ENCODE measurements at regions of chr1 and their contacts with region 1.

Region 1: DNA sequence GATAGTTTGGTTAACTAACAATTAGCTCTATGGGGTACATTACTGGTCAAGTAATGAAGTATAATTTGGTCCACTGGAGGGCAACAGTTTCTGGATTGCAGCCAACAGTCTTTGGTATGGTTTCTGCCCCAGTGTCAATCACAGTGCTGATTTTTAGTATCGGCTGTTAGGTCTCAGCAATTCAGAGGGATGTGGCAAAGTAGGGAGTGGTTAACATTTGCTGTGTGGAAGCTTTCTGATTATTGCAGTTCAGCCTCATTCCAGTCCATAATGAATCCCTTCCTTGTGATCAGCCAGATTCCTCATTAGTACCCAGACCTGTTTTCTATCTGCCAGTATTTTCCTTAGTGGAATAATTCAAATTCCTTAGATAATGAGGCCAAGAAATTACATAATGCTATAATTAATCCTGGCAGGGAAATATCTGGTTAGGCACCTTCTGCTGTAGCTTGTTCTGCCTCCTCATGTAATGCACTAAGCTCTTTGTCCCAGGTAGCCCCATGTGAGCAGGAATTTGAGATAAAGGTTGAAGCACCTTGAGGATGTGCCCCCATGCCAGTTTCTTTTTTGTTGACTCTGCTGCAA is 14.0 kb downstream of the F3 start:
- DNase-seq: no peak
- H3K4me3 ChIP-seq: no peak overlapping the region
- H3K27ac ChIP-seq: no peak overlapping the region
- H3K27me3 ChIP-seq: no peaks in the 10 kb centered on the region
- CTCF ChIP-seq: no peak

Region 2: GRCh38 chr1:94463765-94464330 is 63.7 kb before region 1 on chr1:
- CTCF ChIA-PET with region 1: no interaction called
- POLR2A ChIA-PET with region 1: no interaction called
- DNase-seq: peak; percentile 21
- H3K4me3 ChIP-seq: no peak overlapping the region
- H3K27ac ChIP-seq: no peak overlapping the region
- H3K27me3 ChIP-seq: no peaks in the 10 kb centered on the region
- CTCF ChIP-seq: peak; percentile 71

Region 3: DNA sequence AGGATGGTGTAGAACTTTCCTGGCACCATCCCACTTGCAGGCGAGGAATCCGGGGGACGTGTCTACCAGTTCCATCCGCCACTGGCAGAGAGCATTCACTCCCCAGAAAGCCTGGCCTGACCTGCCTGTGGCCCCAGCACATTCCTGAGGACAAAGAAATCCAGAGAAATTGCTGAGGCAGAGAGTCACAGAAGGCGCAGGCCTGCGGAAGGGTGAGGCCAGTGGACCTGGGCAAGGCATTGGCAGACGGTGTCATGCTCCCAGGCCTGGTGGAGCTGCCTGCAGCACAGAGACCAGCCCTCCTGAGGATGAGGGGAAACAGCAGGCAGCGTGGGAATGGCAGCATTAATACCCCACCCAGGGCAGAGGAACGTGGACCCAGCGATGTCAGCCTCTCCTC is 95.2 kb after region 1 on chr1:
- CTCF ChIA-PET with region 1: no interaction called
- POLR2A ChIA-PET with region 1: interaction called, 10 read pairs
- DNase-seq: no peak
- H3K4me3 ChIP-seq: no peak overlapping the region
- H3K27ac ChIP-seq: peak overlapping the region; percentile 21
- H3K27me3 ChIP-seq: no peaks in the 10 kb centered on the region
- CTCF ChIP-seq: no peak

Region 4: DNA sequence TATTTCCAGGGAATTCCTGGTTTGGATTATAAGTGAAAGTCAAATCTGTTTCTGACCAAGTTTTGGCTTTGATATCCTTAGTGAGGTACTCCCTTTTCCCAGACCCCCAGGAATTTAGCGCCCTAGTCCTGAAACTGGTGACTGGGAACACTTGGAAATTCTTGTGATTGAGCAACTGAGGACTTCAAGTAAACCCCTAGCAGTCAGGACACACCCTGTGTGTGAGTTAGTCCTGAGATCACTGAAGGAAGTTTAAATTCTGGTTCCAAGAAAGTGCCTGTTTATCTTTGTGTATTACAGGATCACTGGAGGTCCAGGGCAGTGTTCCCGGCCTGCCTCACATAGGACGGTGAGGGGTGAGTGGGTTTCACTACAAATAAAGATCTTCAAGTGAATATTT is 109.1 kb after region 1 on chr1:
- CTCF ChIA-PET with region 1: no interaction called
- POLR2A ChIA-PET with region 1: no interaction called
- DNase-seq: no peak
- H3K4me3 ChIP-seq: no peak overlapping the region
- H3K27ac ChIP-seq: peak overlapping the region; percentile 71
- H3K27me3 ChIP-seq: no peaks in the 10 kb centered on the region
- CTCF ChIP-seq: no peak

Measured in AG04450 (cell line).